ENCODE measurements at regions of chr5 and their contacts with region 1.

Region 1: DNA sequence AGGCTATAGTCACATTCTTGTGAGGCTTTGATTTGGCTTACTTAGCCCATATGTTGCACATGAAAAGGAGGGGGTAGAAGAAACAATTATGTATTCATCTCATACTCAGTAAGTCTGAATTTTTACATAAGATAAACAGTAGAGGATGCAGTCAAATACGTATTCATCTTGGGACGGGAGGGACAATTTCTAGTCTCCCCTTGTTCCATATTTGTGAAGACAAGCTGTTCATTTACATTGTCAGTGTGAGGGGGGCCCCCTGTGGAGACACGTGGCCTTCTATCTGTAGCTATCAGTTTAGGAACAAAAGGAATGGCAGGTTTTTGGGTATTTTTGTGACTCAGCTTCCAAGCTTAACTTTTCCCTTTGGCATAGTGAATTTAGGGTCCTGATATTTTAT is 49.2 kb upstream of the PPP1R2B start:
- DNase-seq: peak; percentile 20
- H3K4me3 Mint-ChIP-seq: no peak overlapping the region
- H3K27ac Mint-ChIP-seq: no peak overlapping the region
- H3K4me1 Mint-ChIP-seq: no peaks in the 10 kb centered on the region
- H3K27me3 Mint-ChIP-seq: peaks cover 4% of the 10 kb centered on the region

Region 2: DNA sequence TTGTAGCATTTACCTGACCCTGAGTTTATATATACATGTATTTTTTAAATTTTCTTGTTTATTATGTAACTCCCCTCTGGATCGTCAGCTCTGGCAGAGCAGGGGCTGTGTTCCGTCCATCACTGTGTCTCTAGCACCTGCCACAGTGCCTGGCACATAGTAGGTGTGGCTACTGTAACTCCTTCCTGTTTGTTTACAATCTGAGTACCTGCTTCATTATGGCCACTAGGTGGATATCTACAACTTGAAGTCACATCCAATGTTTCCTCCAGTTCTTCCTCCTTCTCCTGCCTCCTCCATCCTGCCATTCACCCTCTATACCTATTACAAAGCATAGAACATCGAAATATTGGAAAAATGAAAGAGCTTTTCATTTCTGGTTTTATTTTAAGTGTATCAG is 35.0 kb after region 1 on chr5:
- CTCF ChIA-PET with region 1: no interaction called
- intact Hi-C with region 1: loop called (anchors 2 kb)
- DNase-seq: peak; percentile 6
- H3K4me3 Mint-ChIP-seq: no peak overlapping the region
- H3K27ac Mint-ChIP-seq: no peak overlapping the region
- H3K4me1 Mint-ChIP-seq: peaks cover 4% of the 10 kb centered on the region
- H3K27me3 Mint-ChIP-seq: no peaks in the 10 kb centered on the region

Region 3: GRCh38 chr5:157108976-157109375 is 308.0 kb after region 1 on chr5 and contains the start of gene HAVCR2:
- CTCF ChIA-PET with region 1: no interaction called
- intact Hi-C with region 1: no loop called
- DNase-seq: peak; percentile 87
- H3K4me3 Mint-ChIP-seq: peak within 1 kb of the TSS; percentile 65
- H3K27ac Mint-ChIP-seq: peak within 1 kb of the TSS; percentile 87
- H3K4me1 Mint-ChIP-seq: peaks cover 40% of the 10 kb centered on the region
- H3K27me3 Mint-ChIP-seq: no peaks in the 10 kb centered on the region
- total RNA-seq, gene HAVCR2: 10.2 to 10.4 TPM

Measured in activated naive CD4-positive, alpha-beta T cell treated with anti-CD3 and anti-CD28 coated beads for 36 hours (primary cell).